Mammary epithelial cell (primary cell): ENCODE measurements at regions of chr14 and their contacts with region 1.

Region 1: GRCh38 chr14:30270200-30271161 is 288.5 kb upstream of the G2E3 start:
- DNase-seq: peak; percentile 70
- H3K4me3 ChIP-seq: peak overlapping the region in 2 of 3 experiments; percentile 17 to 34
- H3K27ac ChIP-seq: no peak overlapping the region
- H3K4me1 ChIP-seq: peaks cover 8% of the 10 kb centered on the region
- H3K27me3 ChIP-seq: no peaks in the 10 kb centered on the region
- CTCF ChIP-seq: peak; percentile 90 to 97

Region 2: DNA sequence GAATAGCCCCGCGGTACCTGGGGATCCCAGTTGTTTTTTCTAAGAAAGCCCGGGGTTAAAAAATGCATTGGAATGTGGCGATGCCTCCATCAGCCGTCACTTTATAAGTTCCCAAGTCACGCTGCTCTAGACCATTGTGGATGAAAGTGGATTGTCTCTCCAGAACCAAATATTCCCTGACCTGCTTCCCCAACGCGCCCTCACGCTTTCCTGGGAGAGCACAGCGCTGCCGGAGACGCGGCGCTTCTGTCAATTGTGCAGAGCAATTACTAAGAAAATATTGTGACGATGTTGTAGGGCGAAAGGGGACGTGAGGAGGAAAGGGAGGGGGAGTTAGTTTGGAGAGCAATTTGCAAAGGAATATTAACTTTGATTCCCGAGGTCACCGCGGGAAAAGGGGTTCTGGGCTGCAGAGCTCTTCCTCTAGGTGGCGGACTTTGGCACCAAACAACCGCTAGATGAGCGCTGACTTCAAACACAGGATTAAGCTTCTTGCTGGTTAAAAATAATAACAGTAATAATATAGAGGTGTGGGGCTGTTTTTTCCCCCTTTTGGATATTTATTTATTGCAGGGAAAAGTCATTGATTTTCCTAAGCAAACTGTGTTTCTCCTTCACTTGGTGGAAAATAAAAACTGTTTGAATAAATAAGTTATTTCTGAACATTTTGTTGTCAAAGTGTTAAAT is 1513.5 kb before region 1 on chr14:
- CTCF ChIA-PET with region 1: no interaction called
- dilution Hi-C with region 1: no loop called
- in situ Hi-C with region 1: no loop called
- intact Hi-C with region 1: loop called (anchors 5 kb)
- DNase-seq: peak; percentile 37
- H3K4me3 ChIP-seq: no peak overlapping the region
- H3K27ac ChIP-seq: no peak overlapping the region
- H3K4me1 ChIP-seq: no peaks in the 10 kb centered on the region
- H3K27me3 ChIP-seq: peaks cover 66% of the 10 kb centered on the region
- CTCF ChIP-seq: peak; percentile 68 to 72

Region 3: DNA sequence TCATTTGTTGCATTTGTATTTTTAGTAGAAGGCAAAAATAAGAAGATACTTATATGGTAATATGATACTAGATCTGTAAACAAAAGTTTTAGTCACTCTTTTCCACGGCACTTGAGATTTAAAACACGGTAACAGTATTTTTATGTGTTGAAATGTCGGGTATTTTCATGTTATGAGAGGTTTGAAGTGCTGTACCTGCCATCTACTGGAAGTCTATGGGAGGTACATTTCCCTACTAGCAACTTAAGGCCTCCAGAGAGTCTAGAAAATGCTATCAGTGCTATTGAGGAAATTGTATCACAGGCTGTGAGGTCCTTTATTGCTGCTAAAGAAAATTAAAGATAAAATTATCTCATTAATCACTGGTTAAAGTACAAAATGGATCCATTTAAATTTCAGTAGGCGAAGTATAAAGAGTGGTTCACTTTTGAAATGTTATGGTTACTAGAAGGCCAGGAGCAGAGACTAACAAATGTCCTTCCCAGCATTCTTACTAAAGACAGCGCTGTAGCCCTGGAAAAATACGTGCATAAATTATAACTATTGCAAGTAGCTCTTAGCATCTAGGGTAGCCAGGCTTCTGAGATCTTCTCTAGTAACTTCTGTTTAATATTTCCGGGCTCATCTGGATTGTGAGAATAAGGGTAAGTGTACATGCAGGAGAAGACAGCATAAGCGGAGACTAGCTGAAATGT is 265.2 kb before region 1 on chr14:
- CTCF ChIA-PET with region 1: no interaction called
- dilution Hi-C with region 1: no loop called
- in situ Hi-C with region 1: no loop called
- intact Hi-C with region 1: loop called (anchors 5 kb)
- DNase-seq: peak; percentile 21
- H3K4me3 ChIP-seq: no peak overlapping the region
- H3K27ac ChIP-seq: no peak overlapping the region
- H3K4me1 ChIP-seq: no peaks in the 10 kb centered on the region
- H3K27me3 ChIP-seq: no peaks in the 10 kb centered on the region
- CTCF ChIP-seq: peak; percentile 37 to 57

Region 4: GRCh38 chr14:30214461-30215090 is 55.9 kb before region 1 on chr14:
- CTCF ChIA-PET with region 1: interaction called, 15 read pairs
- dilution Hi-C with region 1: no loop called
- in situ Hi-C with region 1: no loop called
- intact Hi-C with region 1: loop called (anchors 1 kb)
- DNase-seq: peak; percentile 55
- H3K4me3 ChIP-seq: no peak overlapping the region
- H3K27ac ChIP-seq: no peak overlapping the region
- H3K4me1 ChIP-seq: peaks cover 5% of the 10 kb centered on the region
- H3K27me3 ChIP-seq: no peaks in the 10 kb centered on the region
- CTCF ChIP-seq: peak; percentile 68 to 70

Region 5: DNA sequence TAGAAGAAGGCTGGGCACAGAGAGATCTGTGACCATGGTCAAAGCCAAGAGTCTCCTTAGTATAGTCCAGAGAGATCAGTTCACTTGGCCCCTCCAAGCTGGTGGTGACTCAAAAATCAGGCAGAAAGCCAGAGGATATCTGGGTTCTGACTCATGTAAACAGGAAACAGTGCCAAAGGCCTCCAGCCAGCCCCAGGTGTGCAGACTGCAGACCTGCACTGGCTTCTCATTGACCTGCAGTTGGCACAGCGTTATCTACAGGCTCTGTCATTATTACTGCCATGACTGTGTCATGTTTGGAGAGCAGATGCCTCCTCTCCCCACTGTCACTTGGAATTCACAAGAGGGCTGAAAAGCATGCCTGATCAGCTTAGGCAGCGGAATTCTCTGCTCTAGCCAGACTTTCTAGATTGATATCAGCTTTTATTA is 47.1 kb before region 1 on chr14:
- CTCF ChIA-PET with region 1: interaction called, 6 read pairs
- dilution Hi-C with region 1: no loop called
- in situ Hi-C with region 1: no loop called
- intact Hi-C with region 1: loop called (anchors 2 kb)
- DNase-seq: peak; percentile 89
- H3K4me3 ChIP-seq: no peak overlapping the region
- H3K27ac ChIP-seq: no peak overlapping the region
- H3K4me1 ChIP-seq: peaks cover 24% of the 10 kb centered on the region
- H3K27me3 ChIP-seq: no peaks in the 10 kb centered on the region
- CTCF ChIP-seq: no peak